Calu3 (cell line): ENCODE measurements at regions of chr9 and their contacts with region 1.

Region 1: GRCh38 chr9:28887188-28887884 is 1314.1 kb upstream of the C9orf72 start:
- DNase-seq: no peak
- H3K4me3 Mint-ChIP-seq: no peak overlapping the region
- H3K27ac Mint-ChIP-seq: no peak overlapping the region
- H3K4me1 Mint-ChIP-seq: peaks cover 22% of the 10 kb centered on the region
- H3K27me3 Mint-ChIP-seq: no peaks in the 10 kb centered on the region
- CTCF ChIP-seq: no peak

Region 2: DNA sequence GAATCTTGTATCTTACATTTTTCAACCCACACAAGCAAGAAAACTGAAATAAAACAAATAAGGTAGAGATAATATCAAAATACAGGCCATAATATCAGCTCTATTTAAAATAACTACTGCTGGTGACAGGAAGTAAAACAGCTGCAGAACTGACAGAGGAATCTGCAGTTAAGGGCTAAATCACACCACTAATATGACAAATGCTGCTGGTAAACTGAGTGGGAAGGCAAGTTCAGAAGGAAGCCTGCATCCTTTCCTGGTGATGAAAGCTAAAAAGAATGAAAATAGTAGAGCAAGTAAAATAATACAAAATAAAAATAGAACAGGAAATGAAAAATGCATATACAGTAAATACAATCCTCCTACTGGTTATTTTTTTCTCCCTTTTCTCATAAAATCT is 20.4 kb before region 1 on chr9:
- CTCF ChIA-PET with region 1: no interaction called
- intact Hi-C with region 1: no loop called
- DNase-seq: no peak
- H3K4me3 Mint-ChIP-seq: no peak overlapping the region
- H3K27ac Mint-ChIP-seq: no peak overlapping the region
- H3K4me1 Mint-ChIP-seq: no peaks in the 10 kb centered on the region
- H3K27me3 Mint-ChIP-seq: no peaks in the 10 kb centered on the region
- CTCF ChIP-seq: no peak

Region 3: DNA sequence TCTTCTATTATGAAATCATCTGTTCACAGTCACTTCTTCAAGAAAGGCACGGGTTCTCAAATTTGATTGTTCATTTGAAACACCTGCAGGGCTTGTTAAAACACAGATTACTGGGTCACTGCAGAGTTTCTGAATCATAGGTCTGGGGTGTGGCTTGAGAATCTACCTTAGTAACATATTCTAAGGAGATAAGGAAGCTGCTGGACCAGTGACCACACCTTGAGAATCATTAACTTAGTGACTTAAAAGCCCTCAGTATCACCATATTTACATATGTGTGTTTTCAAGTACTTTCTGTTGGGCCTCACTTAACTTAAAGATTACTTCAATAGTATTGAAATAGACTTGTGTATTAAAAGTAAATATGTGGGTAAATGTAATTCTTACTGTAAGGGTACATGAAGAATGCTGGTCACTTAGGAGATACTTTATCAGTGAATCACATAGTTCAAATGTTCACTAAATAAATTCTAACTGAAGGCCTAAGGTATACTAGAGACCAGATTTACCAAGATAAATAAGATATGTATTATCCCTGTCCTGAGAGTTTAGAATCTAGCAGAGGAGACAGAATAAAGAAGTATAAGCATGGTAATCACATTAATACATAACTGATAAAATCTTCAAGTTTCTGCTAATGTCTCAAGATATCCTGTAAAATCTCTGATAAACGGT is 28.1 kb after region 1 on chr9:
- CTCF ChIA-PET with region 1: no interaction called
- intact Hi-C with region 1: loop called (anchors 2 kb)
- DNase-seq: peak; percentile 51
- H3K4me3 Mint-ChIP-seq: no peak overlapping the region
- H3K27ac Mint-ChIP-seq: peak overlapping the region; percentile 98
- H3K4me1 Mint-ChIP-seq: peaks cover 24% of the 10 kb centered on the region
- H3K27me3 Mint-ChIP-seq: no peaks in the 10 kb centered on the region
- CTCF ChIP-seq: no peak

Region 4: GRCh38 chr9:28938981-28939380 is 51.6 kb after region 1 on chr9:
- CTCF ChIA-PET with region 1: no interaction called
- intact Hi-C with region 1: no loop called
- DNase-seq: no peak
- H3K4me3 Mint-ChIP-seq: no peak overlapping the region
- H3K27ac Mint-ChIP-seq: no peak overlapping the region
- H3K4me1 Mint-ChIP-seq: no peaks in the 10 kb centered on the region
- H3K27me3 Mint-ChIP-seq: no peaks in the 10 kb centered on the region
- CTCF ChIP-seq: no peak

Region 5: DNA sequence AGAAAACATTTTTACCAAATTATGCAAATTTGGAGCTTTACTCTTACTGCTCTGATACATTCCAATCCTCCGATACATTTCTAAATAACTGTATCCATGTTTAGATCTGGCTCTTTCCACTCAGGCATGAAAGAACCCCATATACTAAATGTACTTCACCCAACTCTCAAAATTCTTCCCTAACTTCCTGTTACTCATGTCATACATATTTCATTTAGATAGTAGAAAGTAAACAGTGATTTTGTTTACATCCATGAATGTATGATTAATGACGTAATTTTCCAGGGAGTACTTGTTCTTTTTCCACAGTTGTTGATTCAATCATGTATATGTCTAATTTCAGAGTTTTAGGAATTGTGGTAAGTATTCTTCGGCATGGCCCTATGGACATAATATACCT is 112.5 kb after region 1 on chr9:
- CTCF ChIA-PET with region 1: no interaction called
- intact Hi-C with region 1: loop called (anchors 10 kb)
- DNase-seq: no peak
- H3K4me3 Mint-ChIP-seq: no peak overlapping the region
- H3K27ac Mint-ChIP-seq: no peak overlapping the region
- H3K4me1 Mint-ChIP-seq: peaks cover 6% of the 10 kb centered on the region
- H3K27me3 Mint-ChIP-seq: no peaks in the 10 kb centered on the region
- CTCF ChIP-seq: no peak

Region 6: DNA sequence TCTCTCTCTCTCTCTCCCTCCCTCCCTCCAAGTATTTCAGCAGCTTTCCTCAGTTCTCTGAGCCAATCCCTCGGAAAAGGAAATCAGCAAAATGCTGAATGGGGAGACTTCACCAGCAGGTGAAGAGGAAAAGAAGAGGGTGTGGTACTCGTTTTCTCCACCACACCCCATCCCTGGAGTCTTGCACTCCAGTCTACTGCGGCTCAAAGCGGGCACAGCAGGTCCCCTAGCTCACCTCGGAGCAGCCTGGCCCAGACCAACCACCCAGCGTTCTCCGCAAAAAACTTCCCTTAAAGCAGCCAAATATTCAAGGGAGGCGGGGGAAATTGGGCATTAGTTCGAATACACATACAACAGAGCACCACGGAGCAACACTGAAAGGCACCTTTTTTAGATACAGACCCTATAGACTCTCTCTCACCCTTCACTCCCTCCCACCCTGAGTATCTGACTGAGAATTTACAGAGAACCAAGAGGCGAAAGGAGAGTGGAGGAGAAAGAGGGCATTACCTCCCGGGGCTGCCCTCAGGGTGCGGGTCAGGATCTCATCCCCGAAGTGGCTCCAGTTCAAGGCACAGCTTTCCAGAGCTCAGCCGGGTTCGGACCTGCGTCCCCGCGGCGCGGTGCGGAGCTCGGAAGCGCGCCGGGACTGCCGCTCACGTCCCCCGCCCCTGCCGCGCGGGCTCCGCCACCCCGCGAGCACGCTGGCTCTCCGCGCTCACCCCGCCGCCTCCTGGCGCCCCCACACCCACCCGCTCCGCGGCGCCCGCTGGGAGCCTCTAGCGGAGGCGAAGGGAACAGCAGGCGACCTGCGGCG is 324.5 kb after region 1 on chr9:
- CTCF ChIA-PET with region 1: no interaction called
- intact Hi-C with region 1: loop called (anchors 10 kb)
- DNase-seq: peak; percentile 80
- H3K4me3 Mint-ChIP-seq: peak overlapping the region; percentile 67
- H3K27ac Mint-ChIP-seq: no peak overlapping the region
- H3K4me1 Mint-ChIP-seq: peaks cover 13% of the 10 kb centered on the region
- H3K27me3 Mint-ChIP-seq: no peaks in the 10 kb centered on the region
- CTCF ChIP-seq: peak; percentile 82